ENCODE measurements at regions of chr2 and their contacts with region 1.

Region 1: GRCh38 chr2:63861220-63861822 is 19.6 kb downstream of the UGP2 start:
- ATAC-seq: peak in 2 of 8 experiments; percentile 52 to 62
- H3K4me3 ChIP-seq: no peak overlapping the region
- H3K27ac ChIP-seq: no peak overlapping the region
- H3K4me1 ChIP-seq: no peaks in the 10 kb centered on the region

Region 2: DNA sequence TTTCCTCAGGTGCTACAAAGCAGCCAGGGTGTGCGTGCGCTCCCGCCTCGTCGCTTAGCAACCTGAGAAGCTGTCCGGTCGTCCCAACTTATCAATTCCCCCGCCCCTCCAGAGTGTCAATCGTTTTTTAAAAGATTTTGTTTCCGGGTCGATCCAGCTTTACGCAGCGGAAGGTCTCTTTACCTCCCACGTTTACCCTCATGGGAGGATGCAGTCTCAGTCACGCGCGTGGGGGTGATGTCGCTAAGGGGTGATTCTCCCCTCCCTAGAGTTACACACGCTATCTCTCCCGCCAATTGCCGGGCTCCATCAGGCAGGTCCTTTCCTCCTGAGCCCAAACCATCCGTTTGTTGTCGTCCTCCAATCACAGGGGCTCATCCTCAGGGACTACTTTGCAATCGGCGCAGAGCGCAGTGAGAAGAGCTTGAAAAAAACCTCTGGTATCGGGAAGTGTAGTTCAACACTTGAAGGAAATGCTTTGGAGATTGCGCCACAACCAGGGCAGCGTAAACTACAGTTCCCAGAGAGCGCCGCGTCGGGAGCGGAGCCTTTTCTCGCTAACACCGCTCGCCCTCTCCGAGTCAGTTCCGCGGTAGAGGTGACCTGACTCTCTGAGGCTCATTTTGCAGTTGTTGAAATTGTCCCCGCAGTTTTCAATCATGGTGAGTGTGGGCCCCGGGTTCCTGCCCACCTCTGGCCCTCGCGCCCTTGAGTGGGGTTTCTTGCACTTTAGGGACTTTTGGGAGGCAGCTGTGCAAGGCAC is 272.8 kb before region 1 on chr2 and contains the starts of genes MDH1 and WDPCP:
- in situ Hi-C with region 1: loop called in 1 of 9 experiments (anchors 25 kb)
- ATAC-seq: peak; percentile 85 to 94 (median 92)
- H3K4me3 ChIP-seq: peak within 1 kb of the TSS; percentile 72 to 91 (median 85)
- H3K27ac ChIP-seq: peak within 1 kb of the TSS; percentile 61 to 85
- H3K4me1 ChIP-seq: peaks cover 7 to 10% of the 10 kb centered on the region in 2 donors
- total RNA-seq, gene MDH1: 172 to 273 (median 220) TPM
- total RNA-seq, gene WDPCP: 5.6 to 22.4 (median 14.6) TPM

Region 3: GRCh38 chr2:63639344-63639743 is 222.0 kb before region 1 on chr2:
- in situ Hi-C with region 1: no loop called
- ATAC-seq: no peak
- H3K4me3 ChIP-seq: no peak overlapping the region
- H3K27ac ChIP-seq: no peak overlapping the region
- H3K4me1 ChIP-seq: no peaks in the 10 kb centered on the region

Region 4: GRCh38 chr2:63698825-63699548 is 162.3 kb before region 1 on chr2:
- in situ Hi-C with region 1: loop called in 3 of 9 experiments (anchors 10 to 25 kb)
- ATAC-seq: peak; percentile 96 to 98 (median 98)
- H3K4me3 ChIP-seq: no peak overlapping the region
- H3K27ac ChIP-seq: no peak overlapping the region
- H3K4me1 ChIP-seq: no peaks in the 10 kb centered on the region

Region 5: DNA sequence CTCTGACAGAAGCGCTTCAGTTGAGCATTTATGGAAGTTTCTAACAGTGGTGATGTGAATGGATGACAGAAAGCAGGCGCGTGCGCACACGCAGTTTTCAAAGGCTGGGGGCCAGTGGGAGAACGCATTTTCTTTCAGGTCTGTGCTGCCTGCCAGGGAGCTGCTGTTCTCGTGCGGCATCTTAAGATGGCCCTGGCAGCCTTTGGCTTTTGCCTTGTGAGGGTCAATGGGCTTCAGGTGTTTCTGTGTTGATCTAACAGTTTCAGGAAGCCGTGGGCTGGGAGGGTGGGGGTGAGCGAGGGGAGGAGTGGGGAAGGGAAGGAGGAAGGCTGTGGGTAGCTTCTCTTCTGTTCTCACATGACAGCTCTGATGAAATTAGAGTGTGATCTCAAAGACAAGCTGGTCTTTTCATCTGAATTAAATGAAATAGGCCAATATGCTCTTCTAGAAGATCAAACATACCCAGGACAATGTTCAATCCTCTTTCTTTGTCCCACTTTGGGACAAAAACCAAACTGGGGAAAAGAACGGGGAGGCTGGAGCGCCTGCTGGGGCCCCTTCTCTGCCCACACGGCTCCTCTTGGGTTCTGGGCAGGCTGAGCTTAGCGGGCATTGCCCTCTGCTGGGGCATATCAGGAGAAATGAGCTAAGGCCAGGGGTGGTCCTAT is 466.3 kb after region 1 on chr2:
- in situ Hi-C with region 1: no loop called
- ATAC-seq: peak; percentile 8 to 73 (median 58)
- H3K4me3 ChIP-seq: no peak overlapping the region
- H3K27ac ChIP-seq: peak overlapping the region in 1 of 2 donors; percentile 53
- H3K4me1 ChIP-seq: peaks cover 24 to 26% of the 10 kb centered on the region in 2 donors